ENCODE measurements at regions of chr9 and their contacts with region 1.

Region 1: DNA sequence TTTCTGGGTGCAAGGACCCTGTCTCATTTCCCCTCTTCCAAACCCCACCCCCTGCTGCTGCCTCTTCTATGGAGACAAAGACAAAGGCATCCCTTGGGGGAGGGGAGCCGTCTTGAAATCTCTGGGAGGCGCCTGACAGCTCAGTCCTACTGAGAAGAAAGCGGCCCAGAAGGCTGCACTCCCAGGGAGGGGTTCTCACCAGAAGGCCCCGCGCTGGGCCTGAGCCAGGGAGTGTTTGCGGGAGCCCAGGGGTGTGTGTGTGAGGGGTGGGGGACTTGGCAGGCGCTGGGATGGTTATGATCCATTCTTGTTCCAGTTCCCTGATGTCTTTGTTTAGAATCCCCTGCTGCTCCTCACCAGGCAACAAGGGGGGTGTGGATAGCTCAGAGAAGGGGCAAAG is 45.7 kb upstream of the ALDH1B1 start:
- DNase-seq: peak in 1 of 4 donors; percentile 8
- ATAC-seq: no peak
- H3K4me3 ChIP-seq: no peak overlapping the region
- H3K27ac ChIP-seq: no peak overlapping the region
- H3K4me1 ChIP-seq: no peaks in the 10 kb centered on the region
- H3K27me3 ChIP-seq: no peaks in the 10 kb centered on the region
- CTCF ChIP-seq: no peak
- POLR2A ChIP-seq: no peak

Region 2: GRCh38 chr9:38008168-38009034 is 338.4 kb before region 1 on chr9:
- intact Hi-C with region 1: no loop called
- DNase-seq: peak in 2 of 4 donors; percentile 58 to 71
- ATAC-seq: peak; percentile 54
- H3K4me3 ChIP-seq: no peak overlapping the region
- H3K27ac ChIP-seq: peak overlapping the region in 3 of 4 donors; percentile 22 to 33 (median 30)
- H3K4me1 ChIP-seq: peaks cover 21% of the 10 kb centered on the region
- H3K27me3 ChIP-seq: no peaks in the 10 kb centered on the region
- CTCF ChIP-seq: no peak
- POLR2A ChIP-seq: no peak

Region 3: GRCh38 chr9:38117651-38118050 is 229.2 kb before region 1 on chr9:
- intact Hi-C with region 1: no loop called
- DNase-seq: no peak
- ATAC-seq: no peak
- H3K4me3 ChIP-seq: no peak overlapping the region
- H3K27ac ChIP-seq: no peak overlapping the region
- H3K4me1 ChIP-seq: no peaks in the 10 kb centered on the region
- H3K27me3 ChIP-seq: no peaks in the 10 kb centered on the region
- CTCF ChIP-seq: no peak
- POLR2A ChIP-seq: no peak

Region 4: GRCh38 chr9:38160613-38161215 is 186.1 kb before region 1 on chr9:
- intact Hi-C with region 1: loop called (anchors 10 kb)
- DNase-seq: peak; percentile 72 to 78 (median 76)
- ATAC-seq: peak; percentile 69
- H3K4me3 ChIP-seq: no peak overlapping the region
- H3K27ac ChIP-seq: no peak overlapping the region
- H3K4me1 ChIP-seq: peaks cover 7% of the 10 kb centered on the region
- H3K27me3 ChIP-seq: no peaks in the 10 kb centered on the region
- CTCF ChIP-seq: peak; percentile 66 to 90 (median 80)
- POLR2A ChIP-seq: no peak

Region 5: GRCh38 chr9:38294220-38294960 is 52.4 kb before region 1 on chr9:
- intact Hi-C with region 1: no loop called
- DNase-seq: no peak
- ATAC-seq: no peak
- H3K4me3 ChIP-seq: no peak overlapping the region
- H3K27ac ChIP-seq: no peak overlapping the region
- H3K4me1 ChIP-seq: peaks cover 30% of the 10 kb centered on the region
- H3K27me3 ChIP-seq: no peaks in the 10 kb centered on the region
- CTCF ChIP-seq: no peak
- POLR2A ChIP-seq: no peak